ENCODE measurements at regions of chr16 and their contacts with region 1.

Region 1: GRCh38 chr16:3400779-3401688 is at the starts of genes ZNF174 and ZSCAN32:
- DNase-seq: peak; percentile 99
- H3K4me3 ChIP-seq: peak within 1 kb of the TSS; percentile 67 to 85 (median 76)
- H3K27ac ChIP-seq: peak within 1 kb of the TSS; percentile 80 to 89 (median 87)
- H3K4me1 ChIP-seq: peaks cover 0 to 33% (median 22%) of the 10 kb centered on the region in 4 donors
- H3K27me3 ChIP-seq: no peaks in the 10 kb centered on the region
- CTCF ChIP-seq: no peak
- EP300 ChIP-seq: no peak
- POLR2A ChIP-seq: peak; percentile 44 to 53
- total RNA-seq, gene ZNF174: 12.2 to 15.8 (median 14.2) TPM
- total RNA-seq, gene ZSCAN32: 12.1 to 16.3 (median 15.3) TPM

Region 2: GRCh38 chr16:3264137-3265036 is 136.6 kb before region 1 on chr16:
- intact Hi-C with region 1: loop called (anchors 2 kb)
- DNase-seq: peak; percentile 99
- H3K4me3 ChIP-seq: peak overlapping the region; percentile 60 to 98 (median 86)
- H3K27ac ChIP-seq: peak overlapping the region; percentile 90 to 100 (median 97)
- H3K4me1 ChIP-seq: peaks cover 0 to 21% (median 20%) of the 10 kb centered on the region in 4 donors
- H3K27me3 ChIP-seq: no peaks in the 10 kb centered on the region
- CTCF ChIP-seq: peak in 2 of 4 experiments; percentile 13 to 18
- EP300 ChIP-seq: no peak
- POLR2A ChIP-seq: peak; percentile 87 to 91

Region 3: GRCh38 chr16:3305109-3306068 is 95.6 kb before region 1 on chr16 and contains the starts of genes TIGD7 and ZNF75A:
- intact Hi-C with region 1: loop called (anchors 5 kb)
- DNase-seq: peak; percentile 93
- H3K4me3 ChIP-seq: peak within 1 kb of the TSS; percentile 61 to 84 (median 67)
- H3K27ac ChIP-seq: peak within 1 kb of the TSS; percentile 89 to 94 (median 92)
- H3K4me1 ChIP-seq: peaks cover 0 to 35% (median 14%) of the 10 kb centered on the region in 4 donors
- H3K27me3 ChIP-seq: no peaks in the 10 kb centered on the region
- CTCF ChIP-seq: peak in 1 of 4 experiments; percentile 10
- EP300 ChIP-seq: no peak
- POLR2A ChIP-seq: peak; percentile 80 to 85
- total RNA-seq, gene TIGD7: 3.5 to 12.8 (median 6.3) TPM
- total RNA-seq, gene ZNF75A: 26.6 to 32.8 (median 27.7) TPM

Region 4: GRCh38 chr16:3349175-3349574 is 51.9 kb before region 1 on chr16:
- intact Hi-C with region 1: no loop called
- DNase-seq: no peak
- H3K4me3 ChIP-seq: no peak overlapping the region
- H3K27ac ChIP-seq: no peak overlapping the region
- H3K4me1 ChIP-seq: no peaks in the 10 kb centered on the region
- H3K27me3 ChIP-seq: no peaks in the 10 kb centered on the region
- CTCF ChIP-seq: no peak
- EP300 ChIP-seq: no peak
- POLR2A ChIP-seq: no peak

Region 5: DNA sequence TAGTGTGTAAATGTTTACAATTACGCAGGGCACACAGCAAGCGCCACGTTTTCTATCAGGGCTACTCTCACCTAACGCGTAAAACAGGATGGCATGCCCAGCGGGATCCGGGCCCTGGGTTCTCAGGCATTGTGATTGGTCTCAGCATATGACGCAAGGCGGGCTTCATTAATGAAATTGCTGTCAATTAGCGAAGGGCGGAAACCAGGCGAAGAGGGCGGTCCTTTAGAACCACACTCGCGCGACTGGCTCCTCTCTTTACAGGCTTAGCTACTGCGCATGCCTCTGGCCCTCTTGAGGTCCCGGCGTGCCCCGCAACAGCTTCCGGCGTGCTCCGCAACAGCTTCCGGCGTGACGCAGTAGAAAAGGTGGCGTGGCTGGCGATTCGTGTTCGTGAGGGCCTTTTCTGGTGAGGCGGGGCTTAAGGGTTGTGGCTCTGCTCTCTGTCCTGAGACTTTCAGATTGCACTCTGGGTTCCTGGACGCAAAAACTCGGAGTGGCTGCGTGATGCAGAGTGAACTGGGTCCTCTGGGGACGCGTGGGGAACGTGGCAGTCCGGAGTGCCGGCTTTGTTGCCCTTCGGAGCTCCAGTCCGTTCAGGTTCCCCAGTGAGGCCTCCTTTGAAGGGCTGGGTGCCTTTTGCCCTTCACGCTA is 36.1 kb before region 1 on chr16:
- intact Hi-C with region 1: loop called (anchors 2 kb)
- DNase-seq: peak; percentile 94
- H3K4me3 ChIP-seq: peak overlapping the region; percentile 20 to 55 (median 50)
- H3K27ac ChIP-seq: peak overlapping the region; percentile 66 to 88 (median 82)
- H3K4me1 ChIP-seq: no peaks in the 10 kb centered on the region
- H3K27me3 ChIP-seq: peaks cover 0 to 8% (median 0%) of the 10 kb centered on the region in 3 donors
- CTCF ChIP-seq: no peak
- EP300 ChIP-seq: peak in 1 of 4 donors; percentile 31
- POLR2A ChIP-seq: no peak

Region 6: DNA sequence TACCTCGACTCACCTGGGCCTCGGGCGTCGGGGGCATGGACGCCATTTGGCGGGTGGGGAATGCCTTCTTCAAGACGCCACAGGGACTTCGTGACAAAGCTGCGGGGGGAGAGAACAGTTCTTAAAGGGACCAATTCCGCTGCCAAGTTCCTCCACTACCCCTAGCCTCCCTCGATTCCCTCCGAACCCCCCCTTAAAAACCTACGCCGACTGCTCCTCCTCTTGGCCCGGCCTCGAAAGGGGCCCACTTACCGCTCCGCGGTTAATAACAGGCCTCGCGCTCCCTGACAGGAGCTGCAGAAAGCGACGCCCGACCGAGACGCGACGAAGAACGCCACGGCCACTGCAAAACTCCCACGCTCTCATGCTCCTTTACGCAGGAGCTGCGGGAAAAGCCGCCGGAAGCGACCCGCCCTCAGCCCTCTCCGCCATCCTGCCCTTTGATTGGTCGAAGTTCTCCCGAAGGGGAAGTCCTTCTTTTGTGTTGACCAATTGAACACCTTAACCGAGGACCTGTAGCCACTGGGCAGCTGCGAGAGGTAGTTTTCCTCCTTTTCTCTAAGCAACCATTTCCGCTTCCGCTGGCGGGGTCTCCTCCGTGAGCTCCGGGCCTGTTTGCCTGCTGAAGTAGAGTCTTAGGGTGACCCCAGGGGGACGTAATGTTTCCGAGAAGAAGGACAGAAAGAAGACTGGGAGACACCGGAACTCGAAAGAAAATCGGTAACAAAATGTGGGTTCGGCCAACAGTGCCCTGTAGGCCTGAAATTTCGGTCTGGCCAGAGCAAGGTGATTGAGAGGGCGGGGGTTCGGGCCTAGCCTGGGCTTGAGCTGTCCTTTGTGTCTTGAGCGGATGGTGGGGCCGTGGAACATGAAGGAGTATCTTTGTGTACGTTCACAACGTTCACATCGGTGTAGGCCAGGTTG is 42.3 kb after region 1 on chr16 and contains the starts of genes NAA60 and ZNF597:
- intact Hi-C with region 1: loop called (anchors 5 kb)
- DNase-seq: peak; percentile 91
- H3K4me3 ChIP-seq: peak within 1 kb of the TSS; percentile 34 to 67 (median 56)
- H3K27ac ChIP-seq: peak within 1 kb of the TSS; percentile 54 to 79 (median 76)
- H3K4me1 ChIP-seq: peaks cover 0 to 17% (median 7%) of the 10 kb centered on the region in 4 donors
- H3K27me3 ChIP-seq: no peaks in the 10 kb centered on the region
- CTCF ChIP-seq: no peak
- EP300 ChIP-seq: no peak
- POLR2A ChIP-seq: peak in 1 of 2 donors; percentile 9
- total RNA-seq, gene NAA60: 15.0 to 30.4 (median 22.6) TPM
- total RNA-seq, gene ZNF597: 1.5 to 2.5 (median 2.1) TPM

Region 7: GRCh38 chr16:3457434-3458252 is 56.6 kb after region 1 on chr16:
- intact Hi-C with region 1: loop called (anchors 2 kb)
- DNase-seq: peak; percentile 96
- H3K4me3 ChIP-seq: peak overlapping the region; percentile 82 to 93 (median 84)
- H3K27ac ChIP-seq: peak overlapping the region; percentile 89 to 97 (median 94)
- H3K4me1 ChIP-seq: peaks cover 0 to 50% (median 42%) of the 10 kb centered on the region in 4 donors
- H3K27me3 ChIP-seq: no peaks in the 10 kb centered on the region
- CTCF ChIP-seq: peak in 2 of 4 experiments; percentile 19 to 46
- EP300 ChIP-seq: no peak
- POLR2A ChIP-seq: peak in 1 of 2 donors; percentile 37

Region 8: DNA sequence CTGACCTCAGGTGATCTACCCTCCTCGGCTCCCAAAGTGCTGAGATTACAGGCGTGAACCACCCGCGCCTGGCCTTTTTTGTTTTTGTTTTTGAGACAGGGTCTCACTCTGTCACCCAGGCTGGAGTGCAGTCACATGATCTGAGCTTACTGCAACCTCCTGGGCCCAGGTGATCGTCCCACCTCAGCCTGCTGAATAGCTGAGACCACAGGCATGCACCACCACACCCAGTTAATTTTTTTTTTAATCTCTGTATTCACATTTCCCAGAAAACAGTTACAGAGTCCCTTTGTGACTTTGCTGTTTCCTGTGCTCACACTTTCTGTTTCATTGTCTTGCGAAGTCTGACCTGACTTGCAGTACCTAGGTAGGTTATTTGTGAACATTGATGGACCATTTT is 102.5 kb after region 1 on chr16:
- intact Hi-C with region 1: loop called (anchors 1 kb)
- DNase-seq: peak; percentile 37
- H3K4me3 ChIP-seq: no peak overlapping the region
- H3K27ac ChIP-seq: no peak overlapping the region
- H3K4me1 ChIP-seq: peaks cover 0 to 23% (median 17%) of the 10 kb centered on the region in 4 donors
- H3K27me3 ChIP-seq: no peaks in the 10 kb centered on the region
- CTCF ChIP-seq: no peak
- EP300 ChIP-seq: no peak
- POLR2A ChIP-seq: no peak

Measured in sigmoid colon (tissue), 7 donors.